GM10248 (cell line): ENCODE measurements at regions of chr1 and their contacts with region 1.

Region 1: GRCh38 chr1:63362578-63362977 is 4.8 kb upstream of the ALG6 start:
- DNase-seq: no peak
- CTCF ChIP-seq: no peak

Region 2: DNA sequence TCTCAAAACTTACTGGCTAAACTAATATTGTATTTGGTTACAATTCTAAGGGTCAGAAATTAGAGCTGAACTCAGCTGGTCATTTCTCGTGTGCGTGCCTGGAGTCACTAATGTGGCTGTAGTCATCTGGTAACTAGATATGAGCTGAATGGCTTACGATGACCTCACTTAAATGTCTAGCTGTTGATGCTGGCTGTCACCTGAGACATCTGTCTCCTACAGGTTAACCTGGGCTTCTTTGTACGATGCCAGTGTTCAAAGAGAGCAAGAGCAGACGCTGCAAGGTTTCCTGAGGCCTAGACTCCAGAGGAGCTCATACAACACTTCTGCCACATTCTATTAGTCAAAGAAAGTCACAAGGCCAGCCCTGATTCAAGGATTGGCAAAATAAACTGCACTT is 12.3 kb before region 1 on chr1:
- CTCF ChIA-PET with region 1: interaction called, 18 read pairs
- POLR2A ChIA-PET with region 1: no interaction called
- DNase-seq: no peak
- CTCF ChIP-seq: no peak